Activated T-helper 1 cell treated with anti-CD3 and anti-CD28 coated beads, Interleukin-12 subunit alpha, Interleukin-12 subunit beta, Interleukin-2, Interleukin-4 antibody, amounts not matched to agents 30 ng/mL and 10 ng/mL and 1 ng/mL, durations not matched to agents 14 hours and 24 hours and 36 hours (primary cell): ENCODE measurements at regions of chrX and their contacts with region 1.

Region 1: DNA sequence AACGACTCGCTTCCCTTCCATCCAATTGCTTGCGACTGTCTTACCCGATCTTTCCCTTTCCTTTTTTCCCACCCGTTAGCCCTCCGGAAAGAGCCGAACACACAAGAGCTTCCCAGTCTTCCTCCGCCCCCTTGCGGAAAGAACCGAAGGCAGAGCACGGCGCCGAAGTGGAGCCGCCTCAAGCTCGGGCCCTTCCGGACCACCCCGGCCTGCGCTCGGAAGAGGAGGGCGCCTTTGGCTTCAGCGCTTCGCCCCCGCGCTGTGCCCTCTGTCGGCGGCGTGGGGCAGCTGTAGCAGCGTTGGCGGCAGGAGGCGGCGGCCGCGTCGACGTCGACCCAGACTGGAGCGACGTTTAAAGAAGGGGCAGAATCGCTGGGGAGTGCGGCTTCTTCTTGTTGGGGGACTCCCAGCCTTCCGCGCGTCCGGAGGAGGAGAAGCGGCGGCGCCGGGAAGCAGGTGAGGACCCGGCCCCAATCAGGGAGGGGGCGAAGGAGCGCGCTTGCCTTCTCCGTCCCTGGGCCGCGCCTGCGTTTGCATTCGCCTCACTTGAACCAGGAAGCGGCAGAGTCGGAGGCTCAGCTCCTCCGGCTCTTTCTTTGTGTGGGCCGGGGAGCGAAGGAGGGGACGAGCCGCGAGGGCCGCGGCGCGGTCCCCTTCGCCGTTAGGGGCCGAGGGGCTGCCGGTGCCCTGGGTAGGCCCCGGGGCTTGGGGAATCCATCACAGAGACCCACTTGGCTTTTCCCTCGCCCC is at the start of gene ZBTB33:
- DNase-seq: peak; percentile 79
- H3K4me3 Mint-ChIP-seq: peak within 1 kb of the TSS; percentile 96
- H3K27ac Mint-ChIP-seq: peak within 1 kb of the TSS; percentile 96
- H3K4me1 Mint-ChIP-seq: peaks cover 17% of the 10 kb centered on the region
- H3K27me3 Mint-ChIP-seq: no peaks in the 10 kb centered on the region
- total RNA-seq, gene ZBTB33: 13.0 and 13.4 TPM in 2 replicates

Region 2: GRCh38 chrX:120238933-120239332 is 11.8 kb before region 1 on chrX:
- intact Hi-C with region 1: no loop called
- DNase-seq: no peak
- H3K4me3 Mint-ChIP-seq: no peak overlapping the region
- H3K27ac Mint-ChIP-seq: no peak overlapping the region
- H3K4me1 Mint-ChIP-seq: peaks cover 7% of the 10 kb centered on the region
- H3K27me3 Mint-ChIP-seq: no peaks in the 10 kb centered on the region

Region 3: DNA sequence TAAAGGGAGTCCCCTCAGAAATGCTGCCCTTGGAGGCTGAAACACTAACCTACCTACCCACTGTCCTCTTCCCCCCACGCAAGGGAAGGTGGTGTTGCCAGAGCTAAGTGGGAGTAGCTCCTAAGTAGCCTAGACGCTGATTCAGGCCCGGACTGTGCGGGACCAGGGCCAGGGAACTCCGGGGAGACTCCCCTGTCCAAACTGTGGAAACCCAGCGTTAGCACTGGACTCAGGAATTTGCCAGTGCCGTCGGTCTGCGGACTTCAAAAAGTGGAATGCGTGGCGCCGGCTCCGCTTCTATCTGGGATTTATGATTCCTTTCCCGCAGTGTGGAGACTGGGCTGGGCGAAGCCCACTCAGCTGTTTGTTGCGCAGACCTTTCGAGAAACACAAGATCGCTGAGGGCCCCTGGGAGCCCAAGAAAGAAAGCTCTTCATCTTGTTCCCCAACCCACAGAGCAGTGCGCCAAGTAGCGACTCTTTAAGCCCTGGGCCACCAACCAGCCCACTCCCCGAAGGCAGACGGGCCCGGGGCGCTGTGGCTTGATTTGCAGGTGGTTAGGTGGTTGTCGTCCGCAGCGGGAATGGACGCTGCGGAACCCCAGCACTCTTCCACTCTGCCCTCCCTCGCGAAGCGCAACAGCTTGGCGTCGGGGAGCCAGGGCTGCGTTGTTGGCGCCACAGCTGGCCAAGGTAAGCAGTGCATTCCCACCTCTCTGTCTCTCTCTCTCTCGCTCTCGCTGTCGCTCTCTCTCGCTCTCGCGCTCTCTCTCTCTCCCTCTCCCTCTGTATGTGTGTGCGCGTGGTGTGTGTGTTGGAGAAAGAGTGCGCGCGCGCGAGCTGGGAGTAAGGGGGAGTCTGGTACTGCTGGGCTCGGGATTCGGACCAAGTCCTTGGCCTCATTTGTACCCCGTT is 58.5 kb after region 1 on chrX:
- intact Hi-C with region 1: loop called (anchors 1 kb)
- DNase-seq: peak; percentile 55
- H3K4me3 Mint-ChIP-seq: peak overlapping the region; percentile 88
- H3K27ac Mint-ChIP-seq: peak overlapping the region; percentile 87
- H3K4me1 Mint-ChIP-seq: peaks cover 21% of the 10 kb centered on the region
- H3K27me3 Mint-ChIP-seq: peaks cover 60% of the 10 kb centered on the region

Region 4: GRCh38 chrX:120485638-120486520 is 235.2 kb after region 1 on chrX:
- intact Hi-C with region 1: loop called (anchors 5 kb)
- DNase-seq: peak; percentile 40
- H3K4me3 Mint-ChIP-seq: peak overlapping the region; percentile 77
- H3K27ac Mint-ChIP-seq: peak overlapping the region; percentile 76
- H3K4me1 Mint-ChIP-seq: peaks cover 12% of the 10 kb centered on the region
- H3K27me3 Mint-ChIP-seq: no peaks in the 10 kb centered on the region

Region 5: GRCh38 chrX:120603707-120604360 is 353.1 kb after region 1 on chrX and contains the start of gene MCTS1:
- intact Hi-C with region 1: loop called (anchors 2 kb)
- DNase-seq: peak; percentile 75
- H3K4me3 Mint-ChIP-seq: peak within 1 kb of the TSS; percentile 99
- H3K27ac Mint-ChIP-seq: peak within 1 kb of the TSS; percentile 99
- H3K4me1 Mint-ChIP-seq: peaks cover 10% of the 10 kb centered on the region
- H3K27me3 Mint-ChIP-seq: no peaks in the 10 kb centered on the region
- total RNA-seq, gene MCTS1: 67.3 and 70.1 TPM in 2 replicates